ENCODE measurements at regions of chr16 and their contacts with region 1.

Region 1: DNA sequence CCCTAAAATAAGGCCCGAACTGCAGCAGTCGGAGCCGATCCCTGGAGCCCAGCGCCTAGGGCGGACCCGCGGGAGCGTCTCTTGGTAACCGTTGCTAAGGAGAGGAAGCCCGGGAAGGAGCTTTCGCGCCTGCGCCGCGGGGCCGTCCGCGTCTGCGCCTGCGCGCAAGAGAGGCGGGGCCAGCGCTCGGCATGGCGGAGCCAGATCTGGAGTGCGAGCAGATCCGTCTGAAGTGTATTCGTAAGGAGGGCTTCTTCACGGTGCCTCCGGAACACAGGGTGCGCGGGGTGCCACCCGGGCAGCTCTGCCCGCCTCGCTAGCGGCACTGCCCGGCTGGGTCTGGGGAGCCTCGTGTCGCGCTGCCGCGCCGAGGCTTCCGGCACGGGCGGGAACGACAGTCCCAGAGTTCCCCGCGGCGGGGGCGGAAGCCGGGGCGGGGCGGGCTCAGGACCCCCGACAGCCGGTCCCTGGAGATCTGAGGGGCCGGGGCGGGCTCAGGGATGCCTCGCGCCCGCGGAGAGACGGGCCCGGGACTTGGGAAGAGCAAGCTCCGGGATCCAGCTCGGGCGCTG is at the start of gene CDK10:
- DNase-seq: peak; percentile 94
- ATAC-seq: peak; percentile 90
- H3K4me3 ChIP-seq: peak within 1 kb of the TSS; percentile 52 to 96 (median 78)
- H3K4me3 Mint-ChIP-seq: peak within 1 kb of the TSS; percentile 96
- H3K27ac ChIP-seq: peak within 1 kb of the TSS; percentile 54 to 83
- H3K27ac Mint-ChIP-seq: peak within 1 kb of the TSS; percentile 97
- H3K4me1 ChIP-seq: peaks cover 7 to 15% of the 10 kb centered on the region in 2 donors
- H3K4me1 Mint-ChIP-seq: peaks cover 18% of the 10 kb centered on the region
- H3K27me3 ChIP-seq: no peaks in the 10 kb centered on the region
- H3K27me3 Mint-ChIP-seq: no peaks in the 10 kb centered on the region
- CTCF ChIP-seq: no peak
- total RNA-seq, gene CDK10: 114 and 119 TPM in 2 replicates

Region 2: GRCh38 chr16:89657442-89658220 is 29.0 kb before region 1 on chr16 and contains the starts of genes CHMP1A and SPATA33:
- CTCF ChIA-PET with region 1: interaction called, 3 read pairs
- POLR2A ChIA-PET with region 1: no interaction called
- intact Hi-C with region 1: loop called (anchors 1 kb)
- DNase-seq: peak; percentile 96
- ATAC-seq: peak; percentile 89
- H3K4me3 ChIP-seq: peak within 1 kb of the TSS; percentile 42 to 97 (median 96)
- H3K4me3 Mint-ChIP-seq: peak within 1 kb of the TSS; percentile 89
- H3K27ac ChIP-seq: peak within 1 kb of the TSS; percentile 38 to 88
- H3K27ac Mint-ChIP-seq: peak within 1 kb of the TSS; percentile 85
- H3K4me1 ChIP-seq: peaks cover 14 to 20% of the 10 kb centered on the region in 2 donors
- H3K4me1 Mint-ChIP-seq: peaks cover 27% of the 10 kb centered on the region
- H3K27me3 ChIP-seq: no peaks in the 10 kb centered on the region
- H3K27me3 Mint-ChIP-seq: no peaks in the 10 kb centered on the region
- CTCF ChIP-seq: no peak
- total RNA-seq, gene CHMP1A: 88.1 and 90.0 TPM in 2 replicates
- total RNA-seq, gene SPATA33: 12.6 and 15.0 TPM in 2 replicates

Region 3: GRCh38 chr16:89873972-89874689 is 187.5 kb after region 1 on chr16:
- CTCF ChIA-PET with region 1: no interaction called
- POLR2A ChIA-PET with region 1: interaction called, 5 read pairs
- intact Hi-C with region 1: loop called (anchors 1 kb)
- DNase-seq: peak; percentile 99
- ATAC-seq: peak; percentile 82
- H3K4me3 ChIP-seq: peak overlapping the region in 4 of 5 experiments; percentile 92 to 99 (median 97)
- H3K4me3 Mint-ChIP-seq: peak overlapping the region; percentile 95
- H3K27ac ChIP-seq: peak overlapping the region; percentile 100
- H3K27ac Mint-ChIP-seq: peak overlapping the region; percentile 99
- H3K4me1 ChIP-seq: peaks cover 14 to 19% of the 10 kb centered on the region in 2 donors
- H3K4me1 Mint-ChIP-seq: peaks cover 16% of the 10 kb centered on the region
- H3K27me3 ChIP-seq: no peaks in the 10 kb centered on the region
- H3K27me3 Mint-ChIP-seq: no peaks in the 10 kb centered on the region
- CTCF ChIP-seq: no peak

Region 4: GRCh38 chr16:89917773-89918452 is 231.3 kb after region 1 on chr16:
- CTCF ChIA-PET with region 1: no interaction called
- POLR2A ChIA-PET with region 1: no interaction called
- intact Hi-C with region 1: no loop called
- DNase-seq: peak; percentile 77
- ATAC-seq: peak; percentile 80
- H3K4me3 ChIP-seq: peak overlapping the region; percentile 8 to 59 (median 46)
- H3K4me3 Mint-ChIP-seq: peak overlapping the region; percentile 81
- H3K27ac ChIP-seq: no peak overlapping the region
- H3K27ac Mint-ChIP-seq: peak overlapping the region; percentile 61
- H3K4me1 ChIP-seq: peaks cover 39 to 41% of the 10 kb centered on the region in 2 donors
- H3K4me1 Mint-ChIP-seq: peaks cover 36% of the 10 kb centered on the region
- H3K27me3 ChIP-seq: peaks cover 0 to 45% (median 20%) of the 10 kb centered on the region in 4 experiments
- H3K27me3 Mint-ChIP-seq: peaks cover 24% of the 10 kb centered on the region
- CTCF ChIP-seq: no peak

Measured in B cell (primary cell).